ENCODE measurements at regions of chr1 and their contacts with region 1.

Region 1: DNA sequence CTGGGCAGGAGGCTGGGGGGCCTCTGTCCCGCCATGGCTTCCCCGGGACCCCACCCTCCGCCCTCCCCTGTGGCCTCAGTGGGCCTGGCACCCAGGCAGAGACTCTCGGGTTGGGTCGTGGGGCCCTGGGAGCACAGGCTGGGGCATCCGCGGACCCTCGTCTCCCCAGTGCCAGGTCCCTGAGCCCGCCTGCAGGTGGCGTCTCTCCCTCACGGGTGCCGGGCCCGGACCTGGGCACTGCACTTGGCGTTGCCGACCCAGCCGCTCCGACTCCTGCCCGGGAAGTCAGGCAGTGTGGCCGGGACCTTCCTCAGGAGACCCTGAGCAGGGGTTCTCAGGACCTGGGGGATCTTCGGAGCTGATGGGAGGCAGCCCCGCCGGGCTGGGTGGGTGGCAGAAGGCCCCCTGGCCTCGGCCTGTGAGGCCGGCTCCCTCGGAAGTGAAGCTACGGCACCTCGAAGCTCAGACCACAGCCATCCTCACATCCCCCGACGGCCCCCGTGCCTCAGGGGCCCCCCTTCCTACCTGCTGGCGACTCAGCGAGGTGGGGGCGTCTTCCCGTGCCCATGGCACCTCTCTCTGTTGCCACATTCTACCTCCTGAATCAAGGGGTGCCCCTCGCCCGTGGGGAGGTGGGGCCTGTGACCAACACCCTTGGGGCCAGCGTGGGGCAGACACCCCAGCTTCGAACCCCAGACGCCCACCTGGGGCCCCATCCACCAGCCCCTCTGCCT is 6.4 kb upstream of the C1orf159 start:
- DNase-seq: peak; percentile 89
- ATAC-seq: peak; percentile 96
- H3K4me3 Mint-ChIP-seq: no peak overlapping the region
- H3K27ac Mint-ChIP-seq: no peak overlapping the region
- H3K4me1 Mint-ChIP-seq: no peaks in the 10 kb centered on the region
- H3K27me3 Mint-ChIP-seq: peaks cover 24% of the 10 kb centered on the region
- CTCF ChIP-seq: peak; percentile 58

Region 2: DNA sequence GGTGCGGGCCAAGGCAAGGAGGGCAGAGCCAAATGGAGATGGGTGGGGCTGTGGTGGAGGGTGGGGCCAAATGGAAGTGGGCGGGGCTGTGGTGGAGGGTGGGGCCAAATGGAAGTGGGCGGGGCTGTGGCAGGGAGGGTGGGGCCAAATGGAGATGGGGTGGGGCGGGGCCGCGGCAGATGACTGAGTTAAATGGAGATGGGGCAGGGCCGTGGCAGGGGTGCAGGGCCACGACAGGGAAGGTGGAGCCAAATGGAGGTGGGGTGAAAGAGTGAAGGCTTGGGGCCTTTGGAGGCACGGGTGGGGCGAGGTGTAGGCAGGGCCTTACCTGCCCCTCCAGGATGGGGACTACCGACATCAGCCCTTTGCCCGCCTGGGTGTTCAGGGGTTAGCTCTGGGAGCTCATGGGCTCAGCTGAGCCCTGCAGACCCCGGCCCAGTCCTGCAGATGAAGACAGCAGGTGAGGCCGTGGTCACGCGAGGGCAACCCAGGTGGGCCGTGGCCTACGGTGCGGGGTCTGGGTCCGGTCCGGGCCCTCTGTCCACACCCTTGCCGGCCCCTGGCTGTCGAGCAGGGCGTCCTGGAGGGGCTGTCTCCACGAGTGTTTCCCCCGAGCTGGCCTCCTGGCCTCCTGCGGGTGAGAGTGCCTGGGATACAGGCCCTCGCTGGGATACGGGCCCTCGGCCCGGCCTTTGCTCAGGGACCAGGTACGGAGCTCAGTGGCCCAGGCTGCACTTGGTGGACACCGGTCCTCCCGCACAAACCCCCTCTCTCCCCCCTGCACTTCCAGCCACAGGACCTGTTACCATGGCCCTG is 30.4 kb before region 1 on chr1:
- CTCF ChIA-PET with region 1: no interaction called
- POLR2A ChIA-PET with region 1: no interaction called
- DNase-seq: no peak
- ATAC-seq: peak; percentile 40
- H3K4me3 Mint-ChIP-seq: no peak overlapping the region
- H3K27ac Mint-ChIP-seq: no peak overlapping the region
- H3K4me1 Mint-ChIP-seq: no peaks in the 10 kb centered on the region
- H3K27me3 Mint-ChIP-seq: peaks cover 11% of the 10 kb centered on the region
- CTCF ChIP-seq: no peak

Region 3: DNA sequence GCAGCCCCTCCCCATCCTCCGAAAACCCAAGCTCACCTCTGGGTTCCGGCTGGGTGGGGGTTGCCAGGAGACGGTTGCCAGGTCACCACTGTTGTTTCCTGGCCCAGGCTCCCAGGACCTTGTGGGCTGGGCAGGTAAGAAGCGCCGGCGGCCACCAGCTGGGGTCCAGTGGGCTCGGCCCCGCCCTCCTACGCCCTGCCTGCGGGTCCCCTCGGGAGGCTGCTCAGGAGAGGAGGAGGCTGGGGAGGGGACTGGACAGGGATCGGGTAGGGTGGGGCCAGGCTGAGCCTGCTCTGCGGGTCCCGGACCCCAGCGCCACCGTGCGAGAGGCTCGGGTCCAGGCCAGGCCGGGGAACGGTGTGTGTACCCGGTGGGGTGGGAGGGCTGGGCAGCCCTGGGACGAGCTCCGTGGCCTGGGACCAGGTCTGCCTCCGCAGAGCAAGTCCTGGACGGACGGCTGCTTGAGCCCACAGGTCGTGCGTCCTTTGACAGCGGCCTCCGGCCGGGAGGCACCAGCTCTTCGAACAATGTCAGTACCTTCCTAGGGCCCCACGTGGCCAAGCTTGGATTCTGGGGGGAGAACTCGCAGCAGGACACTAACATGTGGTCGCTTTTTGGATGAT is 51.7 kb after region 1 on chr1 and contains the start of gene TTLL10:
- CTCF ChIA-PET with region 1: interaction called, 16 read pairs
- POLR2A ChIA-PET with region 1: no interaction called
- DNase-seq: peak; percentile 82
- ATAC-seq: peak; percentile 72
- H3K4me3 Mint-ChIP-seq: peak within 1 kb of the TSS; percentile 40; the same call in 1 of the 2 replicates
- H3K27ac Mint-ChIP-seq: no peak within 1 kb of the TSS
- H3K4me1 Mint-ChIP-seq: peaks cover 20% of the 10 kb centered on the region
- H3K27me3 Mint-ChIP-seq: peaks cover 19% of the 10 kb centered on the region
- CTCF ChIP-seq: no peak
- total RNA-seq, gene TTLL10: 0.78 to 1.1 TPM (median 1.1 TPM) in 3 replicates

Region 4: DNA sequence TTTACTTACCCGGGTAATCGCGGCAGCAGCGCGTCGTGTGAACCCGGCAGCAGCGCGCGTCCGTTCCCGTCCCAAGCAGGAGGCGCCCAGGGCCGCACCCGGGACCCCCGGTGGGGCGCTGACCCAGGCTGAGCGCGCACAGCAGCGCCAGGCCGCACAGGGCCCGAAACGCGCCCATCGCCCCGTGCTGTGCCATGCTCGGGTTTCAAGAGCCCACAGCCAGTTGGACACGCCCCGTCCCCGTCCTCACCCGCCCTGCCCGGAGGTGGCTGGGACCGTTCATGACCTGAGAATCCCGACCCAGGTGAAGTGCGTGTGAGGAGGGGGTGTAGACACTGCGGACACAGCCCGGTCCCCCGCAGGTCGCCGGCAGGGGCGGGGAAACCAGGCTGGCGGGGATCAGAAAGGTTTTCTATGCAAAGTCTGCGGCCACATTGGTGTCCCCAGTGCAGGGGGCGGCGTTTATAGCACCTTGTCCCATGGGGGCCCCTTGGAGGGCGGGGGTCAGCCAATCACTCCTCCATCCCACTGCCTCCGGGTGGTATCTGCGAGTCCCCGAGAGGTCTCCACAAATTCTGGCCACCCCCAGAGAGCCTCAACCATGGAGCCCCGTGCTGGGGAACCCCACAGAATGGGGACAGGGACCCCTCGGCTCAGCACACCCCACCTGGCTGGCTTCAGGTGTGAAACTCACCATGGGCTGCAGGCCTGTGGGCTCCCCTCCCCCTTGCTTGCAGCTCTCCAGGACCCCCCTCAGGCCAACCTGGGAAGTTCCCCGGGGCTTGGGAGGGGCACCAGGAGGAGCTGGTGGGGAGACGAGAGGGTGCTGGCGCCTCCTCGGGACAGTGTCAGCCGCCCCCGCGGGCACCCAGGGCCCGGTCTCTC is 84.4 kb after region 1 on chr1 and contains the start of gene TNFRSF18:
- CTCF ChIA-PET with region 1: interaction called, 17 read pairs
- POLR2A ChIA-PET with region 1: no interaction called
- DNase-seq: peak; percentile 57
- ATAC-seq: peak; percentile 56
- H3K4me3 Mint-ChIP-seq: peak within 1 kb of the TSS; percentile 40
- H3K27ac Mint-ChIP-seq: no peak within 1 kb of the TSS
- H3K4me1 Mint-ChIP-seq: no peaks in the 10 kb centered on the region
- H3K27me3 Mint-ChIP-seq: peaks cover 4% of the 10 kb centered on the region
- CTCF ChIP-seq: no peak
- total RNA-seq, gene TNFRSF18: 0.83 to 1.2 TPM (median 1.1 TPM) in 3 replicates

Region 5: GRCh38 chr1:1231400-1232223 is 109.4 kb after region 1 on chr1 and contains the start of gene SDF4:
- CTCF ChIA-PET with region 1: interaction called, 19 read pairs
- POLR2A ChIA-PET with region 1: no interaction called
- DNase-seq: peak; percentile 96
- ATAC-seq: peak; percentile 90
- H3K4me3 Mint-ChIP-seq: peak within 1 kb of the TSS; percentile 90
- H3K27ac Mint-ChIP-seq: peak within 1 kb of the TSS; percentile 81
- H3K4me1 Mint-ChIP-seq: peaks cover 10% of the 10 kb centered on the region
- H3K27me3 Mint-ChIP-seq: no peaks in the 10 kb centered on the region
- CTCF ChIP-seq: no peak
- total RNA-seq, gene SDF4: 92.3 to 105 TPM (median 101 TPM) in 3 replicates

Measured in WTC11 (cell line).